Calu3 (cell line): ENCODE measurements at regions of chr12 and their contacts with region 1.

Region 1: GRCh38 chr12:75334384-75335030 is at the start of gene GLIPR1L1:
- DNase-seq: peak; percentile 93
- H3K4me3 Mint-ChIP-seq: peak within 1 kb of the TSS; percentile 93
- H3K27ac Mint-ChIP-seq: peak within 1 kb of the TSS; percentile 87
- H3K4me1 Mint-ChIP-seq: peaks cover 11% of the 10 kb centered on the region
- H3K27me3 Mint-ChIP-seq: no peaks in the 10 kb centered on the region
- CTCF ChIP-seq: peak; percentile 92
- total RNA-seq, gene GLIPR1L1: not detected in 2 replicates

Region 2: DNA sequence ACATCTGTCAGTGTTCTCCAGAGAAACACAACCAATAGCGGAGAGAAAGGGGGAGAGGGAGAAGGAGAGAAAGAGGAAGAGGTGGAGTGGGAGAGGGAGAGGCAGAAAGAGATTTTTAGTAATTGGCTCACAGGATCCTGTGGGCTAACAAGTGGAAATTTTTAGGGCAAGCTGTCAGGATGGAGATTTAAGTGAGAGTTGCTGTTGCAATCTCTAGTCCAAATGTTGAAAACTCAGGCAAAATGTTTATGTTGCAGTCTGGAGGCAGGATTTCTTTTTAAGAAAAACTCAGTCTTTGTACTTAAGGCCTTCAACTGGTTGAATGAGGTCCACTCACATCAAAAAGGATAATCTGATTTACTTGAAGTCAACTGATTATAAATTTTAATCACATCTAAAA is 43.8 kb after region 1 on chr12:
- CTCF ChIA-PET with region 1: no interaction called
- intact Hi-C with region 1: no loop called
- DNase-seq: no peak
- H3K4me3 Mint-ChIP-seq: no peak overlapping the region
- H3K27ac Mint-ChIP-seq: no peak overlapping the region
- H3K4me1 Mint-ChIP-seq: no peaks in the 10 kb centered on the region
- H3K27me3 Mint-ChIP-seq: no peaks in the 10 kb centered on the region
- CTCF ChIP-seq: no peak

Region 3: GRCh38 chr12:75480469-75480949 is 146.0 kb after region 1 on chr12 and contains the start of gene GLIPR1:
- CTCF ChIA-PET with region 1: interaction called, 6 read pairs
- intact Hi-C with region 1: loop called (anchors 2 kb)
- DNase-seq: peak; percentile 55
- H3K4me3 Mint-ChIP-seq: peak within 1 kb of the TSS; percentile 29
- H3K27ac Mint-ChIP-seq: peak within 1 kb of the TSS; percentile 83
- H3K4me1 Mint-ChIP-seq: peaks cover 39% of the 10 kb centered on the region
- H3K27me3 Mint-ChIP-seq: no peaks in the 10 kb centered on the region
- CTCF ChIP-seq: no peak
- total RNA-seq, gene GLIPR1: 27.7 and 38.5 TPM in 2 replicates

Region 4: GRCh38 chr12:75505706-75506312 is 171.3 kb after region 1 on chr12:
- CTCF ChIA-PET with region 1: interaction called, 5 read pairs
- intact Hi-C with region 1: loop called (anchors 2 kb)
- DNase-seq: no peak
- H3K4me3 Mint-ChIP-seq: no peak overlapping the region
- H3K27ac Mint-ChIP-seq: no peak overlapping the region
- H3K4me1 Mint-ChIP-seq: peaks cover 10% of the 10 kb centered on the region
- H3K27me3 Mint-ChIP-seq: no peaks in the 10 kb centered on the region
- CTCF ChIP-seq: peak; percentile 52

Region 5: GRCh38 chr12:75738486-75738885 is 404.0 kb after region 1 on chr12:
- CTCF ChIA-PET with region 1: no interaction called
- intact Hi-C with region 1: no loop called
- DNase-seq: no peak
- H3K4me3 Mint-ChIP-seq: no peak overlapping the region
- H3K27ac Mint-ChIP-seq: no peak overlapping the region
- H3K4me1 Mint-ChIP-seq: peaks cover 39% of the 10 kb centered on the region
- H3K27me3 Mint-ChIP-seq: no peaks in the 10 kb centered on the region
- CTCF ChIP-seq: no peak